ENCODE measurements at regions of chr12 and their contacts with region 1.

Region 1: DNA sequence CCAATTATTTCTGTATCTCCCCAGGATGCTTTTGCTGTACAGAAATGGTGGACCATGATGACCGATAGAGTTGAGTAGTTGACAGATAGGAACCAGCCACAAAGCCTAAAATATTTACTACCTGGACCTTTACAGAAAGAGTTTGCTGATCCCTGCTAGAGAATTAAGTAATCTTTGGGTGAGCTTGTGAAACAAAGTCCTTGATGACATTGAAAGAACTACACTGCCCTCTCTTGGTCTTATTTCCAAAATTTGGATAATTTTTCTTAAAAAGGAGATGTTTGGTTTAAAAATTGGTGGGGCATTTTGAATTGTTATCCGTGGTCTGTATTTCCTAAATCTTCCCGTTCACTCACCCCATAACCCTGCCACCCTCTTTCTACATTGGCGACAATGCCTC is 13.7 kb upstream of the TCTN1 start:
- DNase-seq: no peak
- ATAC-seq: no peak
- H3K4me3 Mint-ChIP-seq: no peak overlapping the region
- H3K27ac Mint-ChIP-seq: no peak overlapping the region
- H3K4me1 Mint-ChIP-seq: peaks cover 12% of the 10 kb centered on the region
- H3K27me3 Mint-ChIP-seq: no peaks in the 10 kb centered on the region

Region 2: DNA sequence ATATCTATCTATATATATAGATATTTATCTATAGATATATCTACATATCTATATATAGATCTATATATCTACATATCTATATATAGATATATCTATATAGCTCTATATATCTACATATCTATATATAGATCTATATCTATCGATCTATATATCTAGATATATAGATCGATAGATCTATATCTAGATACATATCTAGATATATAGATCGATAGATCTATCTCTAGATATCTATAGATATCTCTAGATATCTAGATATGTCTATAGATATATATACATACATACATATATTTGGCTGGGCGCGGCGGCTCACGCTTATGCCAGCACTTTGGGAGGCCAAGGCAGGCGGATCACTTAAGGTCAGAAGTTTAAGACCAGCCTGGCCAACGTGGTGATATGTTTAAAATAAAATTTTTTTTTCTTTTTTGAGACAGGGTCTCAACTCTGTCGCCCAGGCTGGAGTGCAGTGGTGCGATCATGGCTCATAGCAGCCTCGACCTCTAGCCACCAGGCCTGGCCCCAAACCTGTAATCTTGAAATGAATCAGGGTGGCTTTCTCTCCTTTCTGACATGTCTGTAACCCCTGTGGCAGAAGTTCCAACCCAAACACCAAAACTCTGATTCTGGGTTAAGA is 168.2 kb before region 1 on chr12:
- CTCF ChIA-PET with region 1: interaction called, 21 read pairs
- POLR2A ChIA-PET with region 1: no interaction called
- DNase-seq: no peak
- ATAC-seq: no peak
- H3K4me3 Mint-ChIP-seq: no peak overlapping the region
- H3K27ac Mint-ChIP-seq: no peak overlapping the region
- H3K4me1 Mint-ChIP-seq: no peaks in the 10 kb centered on the region
- H3K27me3 Mint-ChIP-seq: no peaks in the 10 kb centered on the region

Region 3: DNA sequence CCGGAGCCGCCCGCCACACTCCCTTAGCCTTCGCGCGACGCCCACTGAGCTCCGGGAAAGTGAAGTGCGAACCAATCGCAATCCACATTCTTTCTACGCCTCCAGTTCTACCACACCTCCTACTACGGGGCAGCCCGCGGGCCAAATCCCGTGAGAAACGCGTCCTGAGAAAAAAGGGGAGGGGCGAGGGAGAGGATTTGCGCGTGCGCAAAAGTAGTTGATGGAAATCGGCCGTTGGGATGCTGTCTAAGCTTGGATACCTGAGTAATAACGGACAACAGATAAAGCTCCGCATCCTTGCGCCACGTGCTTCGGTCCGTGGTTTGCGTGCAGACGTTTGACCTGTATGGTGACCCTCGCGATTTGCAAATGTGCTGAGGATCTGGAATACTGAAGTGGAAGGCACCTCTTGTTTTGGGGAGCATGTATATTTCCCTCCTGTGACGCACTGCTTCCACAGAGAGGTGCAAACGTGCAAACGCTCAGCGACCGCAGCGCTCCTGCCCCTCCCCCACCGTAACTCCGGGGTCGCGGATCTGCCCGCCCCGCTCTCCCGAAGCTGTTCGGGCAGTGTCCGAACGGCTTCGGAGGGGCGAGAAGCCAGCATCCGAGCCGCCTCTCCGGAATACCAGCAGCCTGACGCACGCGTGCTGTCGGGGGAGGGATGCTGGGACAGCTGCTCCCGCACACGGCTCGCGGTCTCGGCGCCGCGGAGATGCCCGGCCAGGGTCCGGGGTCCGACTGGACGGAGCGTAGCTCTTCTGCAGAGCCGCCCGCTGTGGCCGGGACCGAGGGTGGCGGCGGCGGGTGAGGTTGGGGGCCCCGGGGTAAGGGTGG is 131.8 kb before region 1 on chr12 and contains the starts of genes FAM216A and GPN3:
- CTCF ChIA-PET with region 1: interaction called, 117 read pairs
- POLR2A ChIA-PET with region 1: interaction called, 10 read pairs
- DNase-seq: peak; percentile 98
- ATAC-seq: peak; percentile 91
- H3K4me3 Mint-ChIP-seq: peak within 1 kb of the TSS; percentile 99
- H3K27ac Mint-ChIP-seq: peak within 1 kb of the TSS; percentile 94
- H3K4me1 Mint-ChIP-seq: peaks cover 28% of the 10 kb centered on the region
- H3K27me3 Mint-ChIP-seq: no peaks in the 10 kb centered on the region
- total RNA-seq, gene FAM216A: 20.5 to 22.9 TPM
- total RNA-seq, gene GPN3: 26.2 to 33.0 TPM

Region 4: GRCh38 chr12:110531741-110532333 is 68.4 kb before region 1 on chr12:
- CTCF ChIA-PET with region 1: interaction called, 44 read pairs
- POLR2A ChIA-PET with region 1: no interaction called
- DNase-seq: no peak
- ATAC-seq: no peak
- H3K4me3 Mint-ChIP-seq: no peak overlapping the region
- H3K27ac Mint-ChIP-seq: no peak overlapping the region
- H3K4me1 Mint-ChIP-seq: peaks cover 19% of the 10 kb centered on the region
- H3K27me3 Mint-ChIP-seq: no peaks in the 10 kb centered on the region

Region 5: DNA sequence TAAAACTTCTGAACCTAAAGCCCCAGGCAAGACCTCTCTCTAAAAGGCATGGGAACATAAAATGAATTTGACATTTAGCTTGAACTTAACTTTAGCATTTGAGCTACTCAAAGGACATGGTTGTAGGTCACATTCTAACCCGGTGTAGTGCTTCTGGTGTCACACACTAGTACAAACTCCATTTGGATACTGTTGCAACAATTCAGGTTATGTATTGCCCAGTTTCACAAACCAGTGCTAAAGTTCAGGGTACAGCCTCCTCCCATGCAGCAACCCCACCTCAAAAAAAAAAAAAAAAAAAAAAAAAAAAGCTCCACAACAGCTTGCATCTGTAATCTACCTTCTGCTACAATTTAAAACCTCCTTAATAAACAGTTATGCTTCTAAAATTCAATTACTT is 24.9 kb before region 1 on chr12:
- CTCF ChIA-PET with region 1: interaction called, 40 read pairs
- POLR2A ChIA-PET with region 1: interaction called, 4 read pairs
- DNase-seq: no peak
- ATAC-seq: no peak
- H3K4me3 Mint-ChIP-seq: no peak overlapping the region
- H3K27ac Mint-ChIP-seq: no peak overlapping the region
- H3K4me1 Mint-ChIP-seq: peaks cover 51% of the 10 kb centered on the region
- H3K27me3 Mint-ChIP-seq: no peaks in the 10 kb centered on the region

Region 6: GRCh38 chr12:110619534-110619953 is 19.3 kb after region 1 on chr12:
- CTCF ChIA-PET with region 1: interaction called, 70 read pairs
- POLR2A ChIA-PET with region 1: interaction called, 6 read pairs
- DNase-seq: peak; percentile 40
- ATAC-seq: peak; percentile 82
- H3K4me3 Mint-ChIP-seq: no peak overlapping the region
- H3K27ac Mint-ChIP-seq: no peak overlapping the region
- H3K4me1 Mint-ChIP-seq: peaks cover 12% of the 10 kb centered on the region
- H3K27me3 Mint-ChIP-seq: no peaks in the 10 kb centered on the region

Region 7: DNA sequence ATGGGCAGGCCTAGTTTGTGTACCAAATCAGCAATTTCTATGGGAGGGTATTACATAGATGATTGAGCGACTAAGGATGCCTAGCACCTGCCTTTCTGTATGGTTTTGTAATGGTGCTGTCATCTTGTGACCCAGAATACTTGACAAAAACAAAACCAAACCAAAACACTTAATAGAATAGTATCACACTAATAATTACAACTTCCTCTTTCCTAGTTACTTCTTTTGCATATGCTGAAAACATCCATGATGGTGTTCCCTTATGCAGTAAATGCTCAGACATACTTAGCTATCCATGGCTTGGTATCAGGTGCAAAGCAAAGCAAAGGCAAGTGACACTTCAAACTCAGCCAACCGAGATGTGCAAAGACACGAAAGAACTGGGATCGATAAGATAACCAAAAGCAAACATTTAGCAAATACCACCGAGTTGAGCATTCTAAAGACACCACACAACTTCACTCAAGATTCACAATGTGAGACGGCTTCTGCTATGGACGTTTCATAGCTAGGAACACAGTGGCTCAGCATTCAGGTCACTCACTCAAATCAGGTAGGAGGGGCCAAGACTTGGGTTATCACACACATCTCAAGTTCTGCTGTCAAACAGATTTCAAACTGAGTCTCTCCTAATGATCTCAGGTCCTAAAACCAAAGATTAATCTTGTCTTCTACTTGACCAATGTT is 118.1 kb after region 1 on chr12:
- CTCF ChIA-PET with region 1: no interaction called
- POLR2A ChIA-PET with region 1: no interaction called
- DNase-seq: no peak
- ATAC-seq: no peak
- H3K4me3 Mint-ChIP-seq: no peak overlapping the region
- H3K27ac Mint-ChIP-seq: no peak overlapping the region
- H3K4me1 Mint-ChIP-seq: no peaks in the 10 kb centered on the region
- H3K27me3 Mint-ChIP-seq: no peaks in the 10 kb centered on the region